ENCODE measurements at regions of chr16 and their contacts with region 1.

Region 1: DNA sequence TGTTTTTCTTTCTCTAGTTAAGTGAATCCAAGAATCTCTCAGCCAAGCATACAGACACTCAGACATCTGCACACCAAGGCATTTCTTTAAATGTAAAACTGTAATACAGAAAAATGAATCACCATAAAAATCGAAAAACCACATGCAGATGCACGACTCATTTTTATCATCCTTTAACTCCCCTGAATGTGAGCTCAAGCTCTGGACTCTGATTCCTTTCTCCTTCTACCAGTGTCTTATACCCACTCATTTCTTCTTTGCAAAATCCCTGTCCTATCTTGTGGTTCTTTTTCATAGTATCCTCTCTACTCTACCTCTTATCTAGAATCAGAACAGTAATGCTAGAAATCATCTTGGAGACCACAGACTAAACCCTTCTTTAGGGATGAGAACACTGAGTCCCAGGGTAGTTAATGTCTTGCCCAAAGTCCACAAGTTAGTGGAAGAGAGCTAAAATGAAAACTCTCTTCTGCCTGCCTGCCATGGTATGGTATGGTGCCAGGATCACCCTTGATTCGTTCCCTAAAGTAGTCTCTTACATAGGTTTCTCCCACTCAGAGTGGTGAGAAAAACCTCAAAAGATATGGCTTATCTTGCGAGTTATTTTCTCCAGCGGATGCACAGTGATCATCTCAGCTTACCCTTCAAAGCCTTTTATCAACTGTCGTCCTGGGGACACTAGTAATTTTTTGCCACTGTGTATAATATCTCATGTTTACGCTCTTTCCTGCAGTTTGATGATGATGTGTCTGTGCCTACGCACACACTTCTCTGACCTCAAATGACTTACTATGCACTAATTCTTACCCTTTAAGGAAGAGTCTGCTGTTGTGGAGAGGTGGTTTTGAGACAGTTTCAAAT is 30.2 kb downstream of the BRD7 start:
- DNase-seq: no peak
- H3K4me3 Mint-ChIP-seq: no peak overlapping the region
- H3K27ac Mint-ChIP-seq: no peak overlapping the region
- H3K4me1 Mint-ChIP-seq: no peaks in the 10 kb centered on the region
- H3K27me3 Mint-ChIP-seq: no peaks in the 10 kb centered on the region
- CTCF ChIP-seq: no peak

Region 2: GRCh38 chr16:50273681-50274325 is 64.8 kb before region 1 on chr16:
- CTCF ChIA-PET with region 1: no interaction called
- POLR2A ChIA-PET with region 1: no interaction called
- intact Hi-C with region 1: no loop called
- DNase-seq: no peak
- H3K4me3 Mint-ChIP-seq: no peak overlapping the region
- H3K27ac Mint-ChIP-seq: no peak overlapping the region
- H3K4me1 Mint-ChIP-seq: no peaks in the 10 kb centered on the region
- H3K27me3 Mint-ChIP-seq: no peaks in the 10 kb centered on the region
- CTCF ChIP-seq: no peak

Region 3: GRCh38 chr16:50315346-50315997 is 23.1 kb before region 1 on chr16:
- CTCF ChIA-PET with region 1: no interaction called
- POLR2A ChIA-PET with region 1: no interaction called
- intact Hi-C with region 1: no loop called
- DNase-seq: no peak
- H3K4me3 Mint-ChIP-seq: no peak overlapping the region
- H3K27ac Mint-ChIP-seq: peak overlapping the region; percentile 31
- H3K4me1 Mint-ChIP-seq: no peaks in the 10 kb centered on the region
- H3K27me3 Mint-ChIP-seq: no peaks in the 10 kb centered on the region
- CTCF ChIP-seq: no peak

Region 4: DNA sequence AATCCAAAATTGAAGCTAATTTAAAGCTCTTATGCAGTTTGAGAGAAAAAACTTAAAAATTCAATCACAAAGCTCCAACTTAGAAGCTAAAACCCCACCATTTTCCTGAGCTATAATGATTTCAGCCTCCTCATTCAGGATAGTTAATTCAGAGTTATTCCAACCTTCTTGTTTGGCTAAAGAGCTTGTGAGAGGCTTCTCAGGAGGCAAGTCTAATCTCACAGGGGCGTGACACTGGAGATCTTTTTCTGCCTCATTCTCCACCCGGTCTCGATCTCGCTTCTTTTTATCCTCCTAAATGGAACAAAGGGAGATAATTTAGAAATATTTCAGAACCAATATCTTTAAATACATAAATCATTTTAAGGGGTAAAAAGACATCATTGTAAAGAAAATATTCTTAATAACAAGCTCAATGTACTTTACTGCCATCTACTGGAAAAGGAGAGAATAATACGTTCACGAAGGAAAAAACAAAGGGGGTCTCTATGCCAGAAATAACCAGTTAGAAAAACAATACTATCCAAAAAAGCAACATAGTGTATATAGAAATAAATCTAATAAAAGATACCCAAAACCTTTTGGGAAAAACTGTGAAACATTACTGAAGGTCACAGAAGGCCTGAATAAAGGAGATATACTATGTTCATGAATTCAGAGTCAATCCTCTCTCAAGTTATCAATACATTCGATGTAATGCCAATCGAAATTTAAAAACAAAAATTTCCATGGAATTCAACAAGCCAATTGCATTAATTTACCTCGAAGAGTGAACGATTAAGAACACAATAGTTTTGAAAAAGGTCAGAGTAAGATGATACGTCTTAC is 16.2 kb after region 1 on chr16:
- CTCF ChIA-PET with region 1: interaction called, 21 read pairs
- POLR2A ChIA-PET with region 1: interaction called, 4 read pairs
- intact Hi-C with region 1: no loop called
- DNase-seq: no peak
- H3K4me3 Mint-ChIP-seq: no peak overlapping the region
- H3K27ac Mint-ChIP-seq: no peak overlapping the region
- H3K4me1 Mint-ChIP-seq: peaks cover 5% of the 10 kb centered on the region
- H3K27me3 Mint-ChIP-seq: no peaks in the 10 kb centered on the region
- CTCF ChIP-seq: peak; percentile 49

Measured in MCF 10A (cell line).